ENCODE measurements at regions of chr1 and their contacts with region 1.

Region 1: DNA sequence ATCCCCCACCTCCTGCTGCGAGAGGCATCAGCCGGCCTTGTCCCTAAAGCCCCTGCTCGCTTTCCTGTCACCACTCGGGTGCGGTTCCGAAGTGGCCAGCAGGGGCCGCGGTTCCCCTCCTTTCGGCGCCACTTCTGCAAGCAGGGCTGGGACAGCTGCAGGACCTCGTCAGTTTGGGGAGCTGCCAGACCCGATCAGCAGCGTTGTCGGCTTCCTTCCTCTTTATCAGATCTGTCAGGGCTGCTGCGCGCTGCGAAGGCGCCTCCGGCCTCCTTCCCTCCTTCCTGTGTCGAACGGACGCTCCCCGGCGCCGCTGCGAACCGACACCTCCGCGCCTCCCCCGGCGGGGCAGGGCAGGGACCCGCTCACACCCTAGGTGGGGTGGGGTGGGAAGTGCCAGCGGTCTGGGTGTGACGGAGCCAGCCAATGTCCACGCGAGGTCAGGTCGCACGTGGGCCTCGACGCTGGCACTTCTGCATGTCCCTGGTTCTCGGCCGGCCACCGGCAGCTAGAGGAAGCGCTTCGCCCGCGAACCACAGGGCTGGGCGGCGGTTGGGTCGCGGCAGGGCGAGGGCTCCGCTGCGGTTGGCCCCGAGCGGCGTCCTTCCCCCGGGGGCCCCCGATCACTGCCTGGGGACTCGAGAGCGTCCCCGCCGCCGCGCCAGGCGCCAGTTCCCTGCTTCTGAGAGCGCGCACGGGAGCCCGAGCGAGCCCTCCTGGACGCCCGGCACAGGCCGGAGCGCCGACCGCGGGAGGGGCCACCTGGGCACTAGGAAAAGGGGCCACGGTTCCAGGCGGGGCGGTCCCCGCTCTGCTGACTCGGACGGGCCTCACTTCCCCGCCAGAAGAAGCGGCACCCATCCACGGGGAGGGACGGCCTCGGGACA is 81.8 kb downstream of the RUNX3 start:
- DNase-seq: peak; percentile 93 to 97 (median 97)
- ATAC-seq: peak; percentile 96 to 97
- H3K4me3 ChIP-seq: peak overlapping the region; percentile 30
- H3K27ac ChIP-seq: no peak overlapping the region
- H3K4me1 ChIP-seq: no peaks in the 10 kb centered on the region
- H3K27me3 ChIP-seq: no peaks in the 10 kb centered on the region

Region 2: DNA sequence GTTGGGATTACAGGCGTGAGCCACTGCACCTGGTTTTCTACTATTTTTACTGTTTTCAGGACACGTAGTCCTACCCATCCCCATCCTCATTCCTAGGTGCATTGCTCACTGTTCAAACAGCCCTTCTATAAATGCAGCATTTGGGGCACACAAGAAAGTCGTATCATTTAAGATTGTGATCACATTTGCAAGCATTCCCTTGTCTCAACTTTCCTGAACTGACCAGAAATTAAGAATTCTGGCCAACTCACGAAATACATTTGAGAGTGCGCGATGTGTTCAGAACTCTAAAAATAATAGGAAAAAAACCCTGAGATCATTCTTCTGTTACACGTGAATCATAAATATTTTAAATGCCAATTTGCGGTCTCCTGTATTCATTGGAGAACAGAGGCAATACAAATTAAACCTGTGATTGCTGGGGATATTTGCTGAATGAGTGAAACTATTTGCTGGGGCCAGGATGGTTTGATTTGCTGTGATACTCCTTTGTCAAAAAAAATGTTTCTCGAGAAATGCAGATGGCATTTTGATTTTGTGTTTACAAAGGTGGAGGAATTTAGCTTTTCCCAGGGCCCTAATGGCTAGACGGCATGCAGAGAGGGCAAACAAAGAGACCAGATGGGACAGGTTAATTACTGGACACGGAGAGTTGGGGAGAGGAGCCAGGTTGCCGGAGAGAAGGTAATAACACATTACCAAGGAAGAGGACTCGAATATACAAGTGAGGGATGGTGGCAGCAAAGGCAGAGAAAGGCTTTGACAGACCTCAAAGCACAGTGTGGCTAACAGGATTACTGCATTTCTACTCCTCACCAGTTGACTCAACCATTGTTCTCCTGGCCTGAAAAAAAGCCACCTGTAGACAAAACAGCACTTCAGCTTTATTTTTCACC is 473.1 kb before region 1 on chr1:
- intact Hi-C with region 1: no loop called
- DNase-seq: no peak
- ATAC-seq: no peak
- H3K4me3 ChIP-seq: no peak overlapping the region
- H3K27ac ChIP-seq: no peak overlapping the region
- H3K4me1 ChIP-seq: no peaks in the 10 kb centered on the region
- H3K27me3 ChIP-seq: no peaks in the 10 kb centered on the region

Region 3: DNA sequence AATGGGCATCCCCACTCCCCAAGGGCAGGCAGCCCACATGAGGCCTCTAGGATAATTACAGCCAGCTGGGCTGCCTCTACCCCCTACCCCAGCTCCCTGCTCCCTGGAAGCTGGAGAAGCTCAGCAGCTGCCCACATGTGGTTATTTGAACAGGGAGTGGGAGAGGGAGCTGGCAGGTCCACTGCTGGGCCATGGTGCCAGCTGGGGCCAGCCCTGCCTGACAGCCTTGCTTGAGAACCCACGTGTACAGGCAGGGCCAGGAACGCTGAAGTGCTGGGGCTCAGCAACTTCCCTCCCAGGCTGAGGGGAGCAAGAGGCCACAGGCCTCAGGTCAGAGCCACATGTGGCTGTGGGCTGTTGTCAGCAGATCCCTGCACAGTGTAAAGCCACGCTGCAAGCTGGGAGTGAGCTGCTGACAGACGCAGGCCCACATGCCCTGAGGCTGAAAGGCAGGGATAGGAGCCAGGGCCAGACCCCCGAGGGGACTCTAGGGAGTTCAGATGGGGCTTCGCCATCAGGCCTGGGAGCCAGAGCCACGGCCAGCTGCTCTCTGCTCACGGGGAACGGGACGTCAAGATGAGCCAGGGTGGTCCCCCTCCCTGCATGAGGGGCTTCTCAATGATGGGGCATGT is 255.0 kb after region 1 on chr1:
- intact Hi-C with region 1: loop called in 2 of 4 experiments (anchors 5 to 10 kb)
- DNase-seq: no peak
- ATAC-seq: peak in 1 of 2 donors; percentile 5
- H3K4me3 ChIP-seq: no peak overlapping the region
- H3K27ac ChIP-seq: no peak overlapping the region
- H3K4me1 ChIP-seq: peaks cover 2% of the 10 kb centered on the region
- H3K27me3 ChIP-seq: no peaks in the 10 kb centered on the region

Region 4: GRCh38 chr1:25204797-25205480 is 356.7 kb after region 1 on chr1:
- intact Hi-C with region 1: loop called in 3 of 4 experiments (anchors 5 to 10 kb)
- DNase-seq: peak in 1 of 3 donors; percentile 6
- ATAC-seq: peak in 1 of 2 donors; percentile 56
- H3K4me3 ChIP-seq: no peak overlapping the region
- H3K27ac ChIP-seq: no peak overlapping the region
- H3K4me1 ChIP-seq: no peaks in the 10 kb centered on the region
- H3K27me3 ChIP-seq: no peaks in the 10 kb centered on the region

Measured in right cardiac atrium (tissue), 5 donors.